ENCODE measurements at regions of chr20 and their contacts with region 1.

Region 1: DNA sequence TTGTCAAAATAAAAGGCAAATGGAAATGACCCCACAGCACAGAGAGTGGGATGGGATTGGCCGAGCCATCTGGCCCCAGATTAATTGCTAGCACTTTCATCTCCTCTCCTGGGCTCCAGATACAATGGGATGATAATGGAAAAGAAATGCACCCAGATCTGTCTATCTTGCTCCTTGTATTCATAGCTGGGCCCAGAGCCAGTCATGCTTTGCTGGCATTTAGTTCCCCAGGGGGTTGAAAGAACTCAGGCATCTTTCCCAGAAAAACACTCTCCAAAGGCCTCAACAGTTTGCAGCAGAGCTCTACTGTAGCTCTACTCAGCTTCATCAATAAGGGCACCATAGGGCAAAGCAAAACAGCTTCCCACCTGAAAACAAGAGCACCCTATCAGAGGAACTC is 116.0 kb upstream of the FOXA2 start:
- DNase-seq: no peak
- ATAC-seq: no peak

Region 2: GRCh38 chr20:22763257-22763906 is 63.0 kb after region 1 on chr20:
- intact Hi-C with region 1: loop called in 1 of 2 experiments (anchors 10 kb)
- DNase-seq: no peak
- ATAC-seq: peak; percentile 58

Region 3: DNA sequence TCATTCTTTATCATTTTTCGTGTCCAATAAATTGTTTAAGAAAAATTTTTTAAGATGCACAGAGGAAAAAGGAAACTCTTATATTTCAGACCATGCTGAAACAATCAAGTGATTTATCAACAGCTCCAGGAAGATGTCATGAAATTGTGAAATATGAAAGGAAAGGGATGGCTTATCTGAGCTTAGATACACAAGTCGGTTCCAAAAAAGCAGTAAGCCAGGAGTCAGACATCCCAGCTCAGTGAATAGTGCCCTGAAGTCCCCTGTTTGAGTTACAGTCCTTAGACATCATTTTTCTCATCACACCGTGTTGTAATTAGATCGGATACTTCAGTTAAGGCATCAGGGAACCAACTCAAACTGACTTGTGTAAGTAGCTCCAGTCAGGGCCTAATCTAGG is 243.7 kb after region 1 on chr20:
- intact Hi-C with region 1: no loop called
- DNase-seq: no peak
- ATAC-seq: no peak

Region 4: GRCh38 chr20:23340524-23340923 is 640.2 kb after region 1 on chr20:
- intact Hi-C with region 1: no loop called
- DNase-seq: peak in 1 of 2 donors; percentile 34
- ATAC-seq: no peak

Measured in left colon (tissue), 2 donors.